CD8-positive, alpha-beta T cell (primary cell): ENCODE measurements at regions of chr6 and their contacts with region 1.

Region 1: DNA sequence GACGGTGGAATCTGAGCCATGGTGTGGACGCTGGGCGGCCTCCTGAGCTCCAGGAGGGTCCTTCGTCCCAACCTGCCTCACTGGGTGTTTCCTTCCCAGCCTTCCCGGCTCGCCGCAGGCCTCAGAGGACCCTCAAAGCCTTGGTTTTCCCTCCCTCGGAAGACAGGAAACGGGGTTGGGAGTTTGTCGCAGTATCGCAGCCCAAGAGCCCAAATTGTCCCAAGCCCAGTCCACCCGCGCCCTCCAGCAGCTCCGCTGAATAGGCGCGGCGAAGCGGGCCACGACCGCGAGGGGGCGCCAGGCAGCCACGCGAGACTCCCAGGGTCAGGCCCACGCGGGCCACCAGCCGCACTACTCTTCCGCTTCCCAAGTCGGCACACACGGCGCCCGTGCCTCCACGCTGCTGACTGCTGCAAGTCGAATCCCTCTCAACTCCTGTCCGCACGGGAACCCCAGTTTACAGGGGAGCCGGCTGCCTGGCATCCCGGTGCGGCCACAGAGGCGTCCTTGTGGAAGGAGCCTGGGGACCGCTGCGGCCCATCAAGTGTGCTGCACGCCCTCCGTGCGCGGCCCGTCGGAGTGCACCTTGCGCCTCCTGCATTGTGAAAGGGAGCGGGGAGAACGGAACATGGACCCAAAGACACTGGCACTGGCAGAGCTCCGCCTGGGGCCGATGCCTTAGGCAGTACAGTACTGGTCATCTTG is 40.4 kb upstream of the HMGA1 start:
- DNase-seq: peak; percentile 81 to 97 (median 90)
- ATAC-seq: peak; percentile 100
- H3K4me3 ChIP-seq: peak overlapping the region; percentile 67 to 89
- H3K4me3 Mint-ChIP-seq: peak overlapping the region; percentile 84
- H3K27ac ChIP-seq: peak overlapping the region in 1 of 2 experiments; percentile 32
- H3K27ac Mint-ChIP-seq: peak overlapping the region; percentile 32
- H3K4me1 ChIP-seq: peaks cover 10% of the 10 kb centered on the region
- H3K4me1 Mint-ChIP-seq: peaks cover 9% of the 10 kb centered on the region
- H3K27me3 ChIP-seq: no peaks in the 10 kb centered on the region
- H3K27me3 Mint-ChIP-seq: no peaks in the 10 kb centered on the region
- CTCF ChIP-seq: peak; percentile 85

Region 2: GRCh38 chr6:34036357-34037069 is 159.8 kb before region 1 on chr6:
- CTCF ChIA-PET with region 1: no interaction called
- POLR2A ChIA-PET with region 1: no interaction called
- intact Hi-C with region 1: no loop called
- DNase-seq: no peak
- ATAC-seq: no peak
- H3K4me3 ChIP-seq: no peak overlapping the region
- H3K4me3 Mint-ChIP-seq: no peak overlapping the region
- H3K27ac ChIP-seq: no peak overlapping the region
- H3K27ac Mint-ChIP-seq: no peak overlapping the region
- H3K4me1 ChIP-seq: no peaks in the 10 kb centered on the region
- H3K4me1 Mint-ChIP-seq: no peaks in the 10 kb centered on the region
- H3K27me3 ChIP-seq: no peaks in the 10 kb centered on the region
- H3K27me3 Mint-ChIP-seq: no peaks in the 10 kb centered on the region
- CTCF ChIP-seq: no peak

Region 3: DNA sequence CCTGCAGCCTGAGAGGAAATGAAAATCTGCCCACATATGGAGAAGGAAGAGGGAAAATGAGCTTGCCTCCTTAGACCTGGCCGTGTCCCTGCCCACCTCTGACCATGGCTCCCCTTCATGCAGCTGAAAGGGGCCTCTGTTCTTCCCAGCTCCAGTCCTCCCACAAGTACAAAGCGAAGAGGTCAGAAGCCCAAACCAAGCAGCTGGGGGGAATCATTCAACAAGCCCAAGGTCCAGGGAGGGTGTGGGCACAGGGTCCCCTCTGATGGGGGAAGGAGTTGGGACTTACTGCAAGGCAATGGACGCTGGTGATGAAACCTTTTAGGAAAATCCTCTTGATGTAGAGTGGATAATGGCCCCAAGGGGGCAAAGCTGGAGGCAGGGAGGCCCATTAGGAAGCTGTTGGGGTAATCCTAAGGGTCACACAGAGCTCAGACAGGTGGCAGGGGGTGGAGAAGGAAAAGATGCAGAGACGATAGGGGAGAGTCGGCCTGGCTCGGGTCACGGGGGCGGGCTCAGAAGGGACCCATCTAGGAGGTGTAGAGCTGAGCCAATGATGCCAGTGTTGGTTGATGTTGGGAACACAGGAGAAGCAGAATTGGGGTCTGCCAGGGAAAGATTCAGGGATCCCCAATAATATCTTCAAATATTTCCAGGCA is 34.3 kb before region 1 on chr6:
- CTCF ChIA-PET with region 1: interaction called, 37 read pairs
- POLR2A ChIA-PET with region 1: interaction called, 3 read pairs
- intact Hi-C with region 1: loop called in 1 of 2 experiments (anchors 1 kb)
- DNase-seq: no peak
- ATAC-seq: no peak
- H3K4me3 ChIP-seq: no peak overlapping the region
- H3K4me3 Mint-ChIP-seq: no peak overlapping the region
- H3K27ac ChIP-seq: no peak overlapping the region
- H3K27ac Mint-ChIP-seq: no peak overlapping the region
- H3K4me1 ChIP-seq: no peaks in the 10 kb centered on the region
- H3K4me1 Mint-ChIP-seq: no peaks in the 10 kb centered on the region
- H3K27me3 ChIP-seq: no peaks in the 10 kb centered on the region
- H3K27me3 Mint-ChIP-seq: peaks cover 2% of the 10 kb centered on the region
- CTCF ChIP-seq: no peak

Region 4: DNA sequence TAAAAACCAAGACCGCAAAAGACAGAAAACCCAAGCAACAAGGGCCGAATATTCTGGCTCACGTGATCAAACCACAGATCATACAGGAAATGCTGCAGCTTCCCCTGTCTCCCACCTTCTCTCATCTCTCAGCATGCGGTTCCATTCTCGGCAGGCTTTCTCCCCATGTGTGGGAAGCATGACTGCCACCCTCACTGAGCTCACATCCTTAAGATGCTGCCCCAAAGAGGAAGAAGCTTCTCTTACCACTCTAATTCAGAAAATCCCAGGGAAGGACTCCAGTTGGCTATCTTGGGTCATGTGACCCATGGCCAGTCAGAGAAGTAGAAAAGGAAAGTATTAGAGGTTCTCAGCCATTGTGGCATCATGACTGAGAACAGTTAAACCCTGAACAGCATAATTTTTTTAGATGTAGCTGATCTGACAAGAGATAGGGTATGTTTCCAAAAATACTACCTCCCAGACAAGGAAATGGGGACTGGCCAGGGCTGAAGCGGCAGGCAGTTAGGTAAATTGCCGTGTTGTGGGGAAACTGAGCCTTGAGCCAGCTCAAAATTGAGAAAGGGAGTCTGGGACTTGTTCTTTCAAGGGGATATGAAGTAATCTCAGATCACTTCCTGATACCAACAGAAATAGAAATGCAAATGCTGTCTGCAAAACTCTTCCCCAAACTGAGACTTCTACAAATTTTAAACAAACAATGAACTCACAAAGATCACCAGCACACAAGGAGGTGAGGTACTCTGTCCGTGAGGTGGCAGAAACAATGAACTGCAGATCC is 13.3 kb before region 1 on chr6:
- CTCF ChIA-PET with region 1: interaction called, 9 read pairs
- POLR2A ChIA-PET with region 1: interaction called, 8 read pairs
- intact Hi-C with region 1: loop called in 1 of 2 experiments (anchors 1 kb)
- DNase-seq: peak; percentile 48 to 95 (median 72)
- ATAC-seq: peak; percentile 92
- H3K4me3 ChIP-seq: peak overlapping the region in 1 of 2 experiments; percentile 18
- H3K4me3 Mint-ChIP-seq: peak overlapping the region; percentile 44
- H3K27ac ChIP-seq: peak overlapping the region in 1 of 2 experiments; percentile 68
- H3K27ac Mint-ChIP-seq: peak overlapping the region; percentile 87
- H3K4me1 ChIP-seq: peaks cover 21% of the 10 kb centered on the region
- H3K4me1 Mint-ChIP-seq: peaks cover 34% of the 10 kb centered on the region
- H3K27me3 ChIP-seq: no peaks in the 10 kb centered on the region
- H3K27me3 Mint-ChIP-seq: no peaks in the 10 kb centered on the region
- CTCF ChIP-seq: no peak

Region 5: DNA sequence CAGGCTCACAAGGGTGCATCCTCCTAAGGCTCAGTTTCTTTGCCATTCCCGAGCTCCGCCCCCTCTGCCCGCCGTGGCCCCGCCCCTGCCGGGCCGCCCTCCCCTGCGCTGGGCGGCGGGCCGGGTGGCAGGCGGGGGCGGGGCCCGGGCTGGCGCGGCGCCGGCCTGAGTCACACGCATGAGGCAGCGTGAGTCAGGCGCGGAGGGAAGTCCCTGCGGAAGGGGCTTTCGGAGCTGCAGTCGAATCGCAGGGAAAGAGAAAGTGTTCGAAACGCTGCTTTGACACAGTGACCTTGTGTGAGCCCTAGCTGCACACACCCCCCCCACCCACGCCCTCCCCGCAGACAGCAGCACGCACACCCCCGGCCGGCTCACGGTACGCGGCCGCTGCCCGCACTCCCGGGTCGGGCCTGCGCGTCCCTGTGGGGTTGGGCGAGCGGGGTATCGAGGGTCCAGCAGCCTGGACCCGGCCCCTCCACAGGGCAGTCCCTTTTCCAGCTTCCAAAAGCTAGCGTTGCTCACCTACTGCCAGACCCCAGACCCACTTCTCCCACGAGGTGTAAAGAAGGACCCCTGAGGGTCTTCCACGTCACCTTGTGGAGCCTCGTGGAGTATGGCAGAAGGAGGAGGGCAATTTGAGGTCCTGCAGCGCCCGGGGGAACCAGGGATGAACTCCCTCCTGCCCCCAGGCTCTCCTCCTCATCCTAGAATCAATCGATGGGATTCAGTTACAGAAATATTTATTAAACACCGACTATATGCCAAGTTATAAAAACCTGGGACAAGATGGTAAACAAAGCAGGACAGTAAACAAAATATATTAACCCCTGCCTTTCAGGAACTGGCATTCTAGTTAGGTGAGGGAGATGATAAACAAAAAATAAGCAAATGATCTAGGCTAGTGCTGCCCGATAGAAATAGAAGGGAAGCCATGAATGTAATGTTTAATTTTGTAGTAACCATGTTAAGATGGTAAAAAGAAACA is 28.0 kb after region 1 on chr6:
- CTCF ChIA-PET with region 1: interaction called, 14 read pairs
- POLR2A ChIA-PET with region 1: interaction called, 4 read pairs
- intact Hi-C with region 1: loop called in 1 of 2 experiments (anchors 1 kb)
- DNase-seq: peak; percentile 88 to 99 (median 94)
- ATAC-seq: peak; percentile 98
- H3K4me3 ChIP-seq: peak overlapping the region; percentile 51 to 86
- H3K4me3 Mint-ChIP-seq: peak overlapping the region; percentile 70
- H3K27ac ChIP-seq: peak overlapping the region; percentile 76 to 87
- H3K27ac Mint-ChIP-seq: peak overlapping the region; percentile 89
- H3K4me1 ChIP-seq: peaks cover 14% of the 10 kb centered on the region
- H3K4me1 Mint-ChIP-seq: peaks cover 20% of the 10 kb centered on the region
- H3K27me3 ChIP-seq: no peaks in the 10 kb centered on the region
- H3K27me3 Mint-ChIP-seq: no peaks in the 10 kb centered on the region
- CTCF ChIP-seq: no peak

Region 6: DNA sequence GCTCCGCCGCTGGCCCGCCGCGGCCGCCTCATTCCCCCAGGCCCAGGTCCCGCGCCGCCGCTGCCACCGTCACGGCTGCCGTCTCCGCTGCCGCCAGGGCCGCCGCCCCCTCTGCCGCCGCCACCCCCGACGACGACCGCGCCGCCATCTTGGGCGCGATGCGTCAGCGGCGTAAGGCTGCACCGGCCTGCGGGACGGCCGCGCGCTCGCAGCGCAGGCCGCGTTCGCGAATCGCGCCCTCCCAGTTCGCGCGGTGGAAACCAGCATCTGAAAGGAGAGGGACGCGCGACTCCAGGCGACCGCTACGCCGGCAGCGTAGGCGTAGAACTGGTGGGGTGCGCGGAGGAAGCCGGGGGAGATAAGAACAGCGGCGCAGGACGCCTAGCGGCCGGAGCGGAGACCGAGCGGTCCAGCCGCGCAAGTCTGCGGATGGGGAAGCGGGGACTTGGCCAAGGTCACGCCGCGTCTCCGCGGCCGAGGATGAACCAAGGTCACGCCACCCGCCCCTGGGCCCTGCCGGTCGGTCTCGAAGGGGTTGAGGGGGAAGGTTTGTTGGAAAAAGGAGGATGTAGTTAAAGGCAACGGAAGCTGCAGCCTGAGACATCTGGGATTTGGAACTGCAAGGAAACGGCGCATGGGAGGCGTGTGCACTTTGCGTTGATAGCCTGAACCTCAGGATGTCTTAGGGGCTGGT is 196.4 kb after region 1 on chr6 and contains the start of gene NUDT3:
- CTCF ChIA-PET with region 1: interaction called, 16 read pairs
- POLR2A ChIA-PET with region 1: interaction called, 5 read pairs
- intact Hi-C with region 1: loop called in 1 of 2 experiments (anchors 2 kb)
- DNase-seq: peak; percentile 90 to 98 (median 93)
- ATAC-seq: peak; percentile 90
- H3K4me3 ChIP-seq: peak within 1 kb of the TSS; percentile 78 to 96
- H3K4me3 Mint-ChIP-seq: peak within 1 kb of the TSS; percentile 72
- H3K27ac ChIP-seq: peak within 1 kb of the TSS; percentile 71 to 75
- H3K27ac Mint-ChIP-seq: peak within 1 kb of the TSS; percentile 94
- H3K4me1 ChIP-seq: peaks cover 15% of the 10 kb centered on the region
- H3K4me1 Mint-ChIP-seq: peaks cover 26% of the 10 kb centered on the region
- H3K27me3 ChIP-seq: no peaks in the 10 kb centered on the region
- H3K27me3 Mint-ChIP-seq: no peaks in the 10 kb centered on the region
- CTCF ChIP-seq: peak; percentile 77
- total RNA-seq, gene NUDT3: 12.5 to 12.9 TPM

Region 7: GRCh38 chr6:34425498-34426410 is 229.5 kb after region 1 on chr6 and contains the start of gene RPS10:
- CTCF ChIA-PET with region 1: interaction called, 19 read pairs
- POLR2A ChIA-PET with region 1: no interaction called
- intact Hi-C with region 1: no loop called
- DNase-seq: peak; percentile 79 to 95 (median 89)
- ATAC-seq: peak; percentile 98
- H3K4me3 ChIP-seq: peak within 1 kb of the TSS; percentile 78 to 96
- H3K4me3 Mint-ChIP-seq: peak within 1 kb of the TSS; percentile 96
- H3K27ac ChIP-seq: peak within 1 kb of the TSS; percentile 90 to 95
- H3K27ac Mint-ChIP-seq: peak within 1 kb of the TSS; percentile 97
- H3K4me1 ChIP-seq: peaks cover 23% of the 10 kb centered on the region
- H3K4me1 Mint-ChIP-seq: peaks cover 36% of the 10 kb centered on the region
- H3K27me3 ChIP-seq: no peaks in the 10 kb centered on the region
- H3K27me3 Mint-ChIP-seq: no peaks in the 10 kb centered on the region
- CTCF ChIP-seq: no peak
- total RNA-seq, gene RPS10: 2,721 to 2,770 TPM

Region 8: GRCh38 chr6:34610819-34611477 is 414.7 kb after region 1 on chr6:
- CTCF ChIA-PET with region 1: interaction called, 22 read pairs
- POLR2A ChIA-PET with region 1: no interaction called
- intact Hi-C with region 1: loop called (anchors 1 kb)
- DNase-seq: no peak
- ATAC-seq: no peak
- H3K4me3 ChIP-seq: no peak overlapping the region
- H3K4me3 Mint-ChIP-seq: no peak overlapping the region
- H3K27ac ChIP-seq: no peak overlapping the region
- H3K27ac Mint-ChIP-seq: peak overlapping the region; percentile 10
- H3K4me1 ChIP-seq: no peaks in the 10 kb centered on the region
- H3K4me1 Mint-ChIP-seq: peaks cover 6% of the 10 kb centered on the region
- H3K27me3 ChIP-seq: no peaks in the 10 kb centered on the region
- H3K27me3 Mint-ChIP-seq: no peaks in the 10 kb centered on the region
- CTCF ChIP-seq: no peak

Region 9: GRCh38 chr6:34709386-34709785 is 513.1 kb after region 1 on chr6:
- CTCF ChIA-PET with region 1: no interaction called
- POLR2A ChIA-PET with region 1: no interaction called
- intact Hi-C with region 1: no loop called
- DNase-seq: no peak
- ATAC-seq: no peak
- H3K4me3 ChIP-seq: no peak overlapping the region
- H3K4me3 Mint-ChIP-seq: no peak overlapping the region
- H3K27ac ChIP-seq: no peak overlapping the region
- H3K27ac Mint-ChIP-seq: no peak overlapping the region
- H3K4me1 ChIP-seq: no peaks in the 10 kb centered on the region
- H3K4me1 Mint-ChIP-seq: no peaks in the 10 kb centered on the region
- H3K27me3 ChIP-seq: no peaks in the 10 kb centered on the region
- H3K27me3 Mint-ChIP-seq: no peaks in the 10 kb centered on the region
- CTCF ChIP-seq: no peak

Region 10: GRCh38 chr6:35544523-35545313 is 1348.4 kb after region 1 on chr6:
- CTCF ChIA-PET with region 1: no interaction called
- POLR2A ChIA-PET with region 1: no interaction called
- intact Hi-C with region 1: no loop called
- DNase-seq: no peak
- ATAC-seq: no peak
- H3K4me3 ChIP-seq: no peak overlapping the region
- H3K4me3 Mint-ChIP-seq: no peak overlapping the region
- H3K27ac ChIP-seq: no peak overlapping the region
- H3K27ac Mint-ChIP-seq: no peak overlapping the region
- H3K4me1 ChIP-seq: no peaks in the 10 kb centered on the region
- H3K4me1 Mint-ChIP-seq: peaks cover 3% of the 10 kb centered on the region
- H3K27me3 ChIP-seq: no peaks in the 10 kb centered on the region
- H3K27me3 Mint-ChIP-seq: peaks cover 3% of the 10 kb centered on the region
- CTCF ChIP-seq: no peak